ENCODE measurements at regions of chr1 and their contacts with region 1.

Region 1: DNA sequence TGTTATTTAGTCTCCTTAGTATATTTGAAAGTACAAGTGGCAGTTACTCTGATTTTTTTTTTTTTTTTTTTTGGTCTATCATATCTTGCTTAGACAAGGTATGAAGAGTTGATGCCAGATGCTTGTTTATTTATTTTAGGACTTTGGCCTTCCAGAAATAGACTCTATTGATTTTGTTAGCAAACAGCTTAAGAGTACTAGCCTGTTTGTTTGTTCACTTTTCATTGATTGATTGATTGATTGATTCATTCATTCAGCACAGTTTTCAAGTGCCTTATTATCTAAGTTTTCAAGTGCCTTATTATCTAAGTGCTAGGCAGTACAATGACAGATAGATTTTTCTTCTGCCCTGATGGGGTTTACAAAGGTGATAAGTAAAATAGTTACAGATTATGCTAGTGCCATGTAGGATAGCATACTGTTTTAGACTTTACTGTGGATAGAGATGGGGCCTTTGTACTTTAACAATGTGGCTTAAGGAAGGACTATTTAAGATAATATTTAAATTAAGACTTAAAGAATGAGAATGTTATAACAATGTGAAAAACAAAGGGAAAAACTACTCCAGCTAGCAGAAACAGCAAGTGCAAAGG is 50.5 kb downstream of the MTF2 start:
- DNase-seq: no peak
- ATAC-seq: no peak
- H3K4me3 ChIP-seq: no peak overlapping the region
- H3K4me3 Mint-ChIP-seq: no peak overlapping the region
- H3K27ac ChIP-seq: no peak overlapping the region
- H3K27ac Mint-ChIP-seq: no peak overlapping the region
- H3K4me1 ChIP-seq: no peaks in the 10 kb centered on the region
- H3K4me1 Mint-ChIP-seq: peaks cover 3% of the 10 kb centered on the region
- H3K27me3 ChIP-seq: no peaks in the 10 kb centered on the region
- H3K27me3 Mint-ChIP-seq: no peaks in the 10 kb centered on the region
- CTCF ChIP-seq: no peak

Region 2: GRCh38 chr1:93021539-93022134 is 108.0 kb before region 1 on chr1:
- CTCF ChIA-PET with region 1: no interaction called
- POLR2A ChIA-PET with region 1: no interaction called
- intact Hi-C with region 1: loop called in 1 of 2 experiments (anchors 5 kb)
- DNase-seq: peak in 3 of 9 experiments; percentile 7 to 72 (median 57)
- ATAC-seq: peak; percentile 79
- H3K4me3 ChIP-seq: no peak overlapping the region
- H3K4me3 Mint-ChIP-seq: no peak overlapping the region
- H3K27ac ChIP-seq: no peak overlapping the region
- H3K27ac Mint-ChIP-seq: no peak overlapping the region
- H3K4me1 ChIP-seq: no peaks in the 10 kb centered on the region
- H3K4me1 Mint-ChIP-seq: peaks cover 3% of the 10 kb centered on the region
- H3K27me3 ChIP-seq: no peaks in the 10 kb centered on the region
- H3K27me3 Mint-ChIP-seq: peaks cover 11% of the 10 kb centered on the region
- CTCF ChIP-seq: peak; percentile 96

Region 3: GRCh38 chr1:93033785-93034184 is 95.8 kb before region 1 on chr1:
- CTCF ChIA-PET with region 1: no interaction called
- POLR2A ChIA-PET with region 1: no interaction called
- intact Hi-C with region 1: no loop called
- DNase-seq: no peak
- ATAC-seq: no peak
- H3K4me3 ChIP-seq: no peak overlapping the region
- H3K4me3 Mint-ChIP-seq: no peak overlapping the region
- H3K27ac ChIP-seq: no peak overlapping the region
- H3K27ac Mint-ChIP-seq: no peak overlapping the region
- H3K4me1 ChIP-seq: peaks cover 7% of the 10 kb centered on the region
- H3K4me1 Mint-ChIP-seq: peaks cover 10% of the 10 kb centered on the region
- H3K27me3 ChIP-seq: no peaks in the 10 kb centered on the region
- H3K27me3 Mint-ChIP-seq: no peaks in the 10 kb centered on the region
- CTCF ChIP-seq: no peak

Region 4: DNA sequence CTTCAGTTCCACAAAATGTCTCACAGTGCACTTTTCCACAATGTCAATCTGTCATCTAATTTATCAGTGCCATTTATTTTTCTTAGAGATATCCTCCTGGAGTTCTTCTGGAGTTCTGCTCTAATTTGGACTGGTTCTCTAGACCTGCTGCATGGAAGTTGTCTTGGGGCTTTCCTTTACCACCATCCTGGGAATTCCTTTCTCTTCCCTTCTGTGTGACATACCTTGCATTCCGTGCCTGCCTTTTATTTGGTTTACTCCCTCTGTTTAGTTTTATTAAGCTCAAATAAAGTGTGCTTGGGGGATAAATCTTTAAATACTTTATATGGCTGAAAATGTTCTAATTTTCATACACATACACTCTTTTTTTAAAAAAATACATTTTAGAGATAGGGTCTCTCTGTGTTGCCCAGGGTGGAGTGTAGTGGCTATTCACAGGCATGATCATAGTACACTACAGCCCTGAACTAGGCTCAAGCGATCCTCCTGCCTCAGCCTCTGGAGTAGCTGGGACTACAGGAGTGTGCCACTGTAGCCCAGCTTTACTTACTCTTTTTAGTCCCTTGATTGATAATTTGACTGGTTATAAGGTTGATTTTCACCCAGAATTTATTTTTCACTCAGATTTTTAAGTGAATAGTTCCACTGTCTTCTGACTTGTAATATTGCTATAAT is 36.1 kb before region 1 on chr1:
- CTCF ChIA-PET with region 1: interaction called, 3 read pairs
- POLR2A ChIA-PET with region 1: no interaction called
- intact Hi-C with region 1: loop called in 1 of 2 experiments (anchors 5 kb)
- DNase-seq: no peak
- ATAC-seq: no peak
- H3K4me3 ChIP-seq: no peak overlapping the region
- H3K4me3 Mint-ChIP-seq: peak overlapping the region; percentile 23
- H3K27ac ChIP-seq: no peak overlapping the region
- H3K27ac Mint-ChIP-seq: peak overlapping the region; percentile 57
- H3K4me1 ChIP-seq: peaks cover 29% of the 10 kb centered on the region
- H3K4me1 Mint-ChIP-seq: peaks cover 73% of the 10 kb centered on the region
- H3K27me3 ChIP-seq: no peaks in the 10 kb centered on the region
- H3K27me3 Mint-ChIP-seq: no peaks in the 10 kb centered on the region
- CTCF ChIP-seq: no peak

Measured in CD8-positive, alpha-beta T cell (primary cell).